ENCODE measurements at regions of chr1 and their contacts with region 1.

Region 1: DNA sequence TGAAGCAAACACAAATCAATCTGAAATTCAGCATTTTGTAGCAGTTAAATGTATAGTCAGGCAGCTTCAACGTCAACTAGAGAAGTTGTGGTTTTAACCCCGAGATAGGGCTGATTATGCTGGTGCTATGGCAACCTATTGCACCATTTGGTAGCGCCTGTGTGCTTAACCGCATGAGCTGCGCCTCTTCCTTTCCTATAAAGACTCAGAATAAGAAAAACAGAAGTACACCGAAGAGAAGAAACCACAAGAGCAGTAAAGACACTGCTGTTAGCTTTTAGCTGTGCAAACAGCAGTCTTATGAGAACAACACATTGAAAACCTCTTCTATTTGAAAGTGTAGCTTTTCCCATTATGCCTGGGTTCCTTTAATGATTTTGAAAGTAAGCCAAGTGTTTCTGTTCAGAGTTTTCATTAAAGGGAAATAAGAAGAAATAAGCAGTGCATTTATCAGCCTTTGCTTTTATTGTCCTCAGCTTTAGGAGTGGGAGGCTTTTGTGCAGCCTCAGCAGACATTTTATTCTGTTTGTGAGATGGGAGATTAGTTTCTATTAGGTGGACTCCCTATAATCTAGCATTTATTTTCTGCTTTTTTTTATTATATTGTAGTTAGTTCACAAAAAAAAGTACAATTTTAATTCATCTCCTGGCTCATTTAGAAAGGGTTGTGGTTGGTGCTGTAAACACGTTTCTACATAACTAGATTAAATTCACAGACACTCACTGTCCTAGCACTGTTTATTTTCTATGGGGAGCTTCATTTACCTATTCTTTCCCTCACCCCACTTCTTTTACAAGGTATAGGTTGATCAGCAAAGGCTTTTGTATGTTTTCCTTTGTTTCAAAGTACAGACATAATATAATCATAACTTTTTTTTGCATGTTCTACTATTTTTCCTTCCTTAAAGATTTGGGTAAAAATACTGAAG is 43.3 kb downstream of the PTPRC start:
- DNase-seq: peak; percentile 97
- ATAC-seq: peak; percentile 93
- H3K4me3 ChIP-seq: peak overlapping the region; percentile 12; the same call in 1 of the 2 replicates
- H3K27ac ChIP-seq: peak overlapping the region; percentile 81
- H3K4me1 ChIP-seq: peaks cover 63% of the 10 kb centered on the region
- H3K27me3 ChIP-seq: no peaks in the 10 kb centered on the region
- CTCF ChIP-seq: no peak
- EP300 ChIP-seq: peak; percentile 77 to 98
- POLR2A ChIP-seq: peak; percentile 48
- RAD21 ChIP-seq: peak; percentile 32

Region 2: GRCh38 chr1:198088360-198089071 is 593.6 kb before region 1 on chr1:
- CTCF ChIA-PET with region 1: interaction called, 3 read pairs
- POLR2A ChIA-PET with region 1: no interaction called
- RAD21 ChIA-PET with region 1: no interaction called
- SMC1A ChIA-PET with region 1: interaction called, 5 read pairs
- in situ Hi-C with region 1: loop called (anchors 10 kb)
- intact Hi-C with region 1: loop called (anchors 5 kb)
- DNase-seq: no peak
- ATAC-seq: peak; percentile 58
- H3K4me3 ChIP-seq: no peak overlapping the region
- H3K27ac ChIP-seq: no peak overlapping the region
- H3K4me1 ChIP-seq: no peaks in the 10 kb centered on the region
- H3K27me3 ChIP-seq: no peaks in the 10 kb centered on the region; a peak in 1 of 4 replicates
- CTCF ChIP-seq: peak; percentile 43 to 64 (median 48); a peak in 5 of 6 replicates
- EP300 ChIP-seq: no peak
- POLR2A ChIP-seq: no peak
- RAD21 ChIP-seq: peak; percentile 72

Region 3: DNA sequence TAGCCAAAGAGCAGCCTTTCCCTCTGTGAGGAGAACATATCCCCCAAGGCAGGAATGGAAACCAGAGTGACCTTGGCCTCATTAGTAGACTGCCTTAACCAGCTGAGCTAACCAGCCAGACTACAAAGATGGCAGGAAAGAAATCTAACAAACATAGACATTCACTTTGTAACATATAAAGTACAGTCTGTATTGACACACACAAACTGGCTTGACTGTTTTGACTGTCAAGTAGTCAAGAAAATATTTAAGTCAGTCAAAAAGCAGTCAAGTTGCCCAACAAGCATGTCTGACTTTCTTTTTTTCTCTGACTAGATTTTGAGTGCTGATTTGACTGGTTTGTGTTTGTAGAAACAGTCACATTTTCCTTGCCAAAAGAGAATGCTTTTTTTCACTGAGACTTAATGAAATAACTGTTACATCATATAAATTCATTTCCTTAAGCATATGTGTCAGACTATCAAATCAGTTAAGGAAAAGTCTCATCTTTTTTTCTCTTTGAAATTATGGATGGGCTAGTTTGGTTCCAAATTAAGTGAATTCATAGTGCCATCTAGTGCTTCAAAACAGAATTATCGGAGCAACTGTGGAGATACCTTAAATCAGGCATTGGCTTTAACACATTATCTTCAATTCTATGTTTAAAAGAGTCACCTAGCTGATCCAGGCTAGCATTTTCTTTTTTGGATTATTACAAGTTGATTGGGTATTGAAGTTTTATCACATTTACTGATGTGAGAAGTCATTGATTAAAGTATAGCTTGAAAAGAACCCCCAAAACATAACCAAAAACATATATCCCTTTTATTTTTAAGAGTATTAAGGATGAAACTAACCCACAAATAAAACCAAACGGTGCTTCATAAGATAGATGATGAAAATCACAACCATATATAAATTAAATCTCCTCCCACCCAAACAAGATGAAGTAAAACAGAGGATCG is 216.6 kb before region 1 on chr1:
- CTCF ChIA-PET with region 1: interaction called, 48 read pairs
- POLR2A ChIA-PET with region 1: no interaction called
- RAD21 ChIA-PET with region 1: interaction called, 36 read pairs
- SMC1A ChIA-PET with region 1: interaction called, 12 read pairs
- in situ Hi-C with region 1: no loop called
- intact Hi-C with region 1: loop called (anchors 2 kb)
- DNase-seq: no peak
- ATAC-seq: peak; percentile 85
- H3K4me3 ChIP-seq: no peak overlapping the region
- H3K27ac ChIP-seq: no peak overlapping the region
- H3K4me1 ChIP-seq: no peaks in the 10 kb centered on the region
- H3K27me3 ChIP-seq: no peaks in the 10 kb centered on the region
- CTCF ChIP-seq: peak; percentile 46 to 74 (median 59)
- EP300 ChIP-seq: no peak
- POLR2A ChIP-seq: no peak
- RAD21 ChIP-seq: peak; percentile 84

Region 4: DNA sequence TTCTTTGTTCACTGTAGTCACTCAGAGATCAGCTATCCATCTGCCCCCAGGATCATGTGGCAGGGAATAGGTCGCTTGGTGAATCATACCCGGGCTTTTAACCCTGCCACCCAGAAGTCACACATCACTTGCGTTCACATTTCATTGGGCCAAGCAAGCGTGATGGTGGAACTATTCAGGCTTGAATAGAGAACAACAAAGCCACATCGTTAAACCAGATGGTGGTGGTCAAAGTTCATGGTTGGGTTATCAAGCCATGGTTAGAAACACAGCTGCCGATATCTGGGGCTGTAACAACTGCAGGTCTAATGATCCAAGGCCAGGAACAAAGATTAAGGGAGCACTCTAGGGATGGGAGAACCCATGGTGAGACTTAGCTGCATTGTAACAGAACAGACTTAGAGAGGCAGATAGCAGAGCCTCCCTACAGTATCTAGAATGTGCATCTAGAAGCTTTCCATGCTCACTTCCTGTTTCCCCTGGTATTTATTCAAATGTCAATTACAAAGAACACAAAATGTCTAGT is 83.2 kb before region 1 on chr1:
- CTCF ChIA-PET with region 1: interaction called, 17 read pairs
- POLR2A ChIA-PET with region 1: interaction called, 11 read pairs
- RAD21 ChIA-PET with region 1: interaction called, 61 read pairs
- SMC1A ChIA-PET with region 1: interaction called, 83 read pairs
- in situ Hi-C with region 1: no loop called
- intact Hi-C with region 1: loop called (anchors 1 kb)
- DNase-seq: peak; percentile 89
- ATAC-seq: peak; percentile 88
- H3K4me3 ChIP-seq: peak overlapping the region; percentile 24; the same call in 1 of the 2 replicates
- H3K27ac ChIP-seq: peak overlapping the region; percentile 81
- H3K4me1 ChIP-seq: peaks cover 27% of the 10 kb centered on the region
- H3K27me3 ChIP-seq: no peaks in the 10 kb centered on the region
- CTCF ChIP-seq: no peak
- EP300 ChIP-seq: peak; percentile 63 to 84; a peak in 3 of 4 replicates
- POLR2A ChIP-seq: no peak; the same call in 1 of the 2 replicates
- RAD21 ChIP-seq: no peak

Region 5: DNA sequence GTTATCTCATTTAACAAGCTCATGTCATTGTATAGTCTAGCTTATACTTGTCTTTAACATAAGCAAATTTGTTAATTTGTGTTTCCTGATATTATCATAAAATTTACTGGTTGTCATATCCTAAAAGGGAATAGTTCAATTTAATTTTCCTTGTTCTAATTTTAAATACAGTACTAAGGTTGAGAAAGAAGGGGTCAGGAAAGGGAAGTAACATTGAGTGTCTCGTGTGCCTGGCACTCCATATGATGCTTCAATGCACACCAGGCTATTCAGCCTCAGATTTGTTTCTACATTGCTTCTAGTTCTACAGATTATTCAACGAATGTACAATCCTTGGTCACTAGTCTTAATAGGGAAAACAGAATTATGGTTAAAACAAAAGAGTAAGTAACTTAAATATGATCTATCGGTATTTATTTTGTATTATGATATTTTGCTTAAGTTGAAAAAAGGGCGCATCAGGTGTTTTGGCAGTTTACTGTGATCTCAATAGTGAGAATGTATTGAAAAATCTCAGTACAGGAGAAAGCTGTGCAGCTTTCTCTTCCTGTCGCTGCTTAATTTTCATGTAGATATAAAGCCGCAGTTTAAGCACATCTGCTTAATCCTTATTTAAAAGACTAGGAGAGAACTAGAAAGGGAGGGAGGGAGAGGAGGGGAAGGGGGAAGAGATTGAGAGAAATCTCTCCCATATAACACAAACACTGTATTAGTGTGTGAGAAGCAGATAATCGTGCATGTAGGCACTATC is 30.3 kb before region 1 on chr1:
- CTCF ChIA-PET with region 1: interaction called, 8 read pairs
- POLR2A ChIA-PET with region 1: interaction called, 17 read pairs
- RAD21 ChIA-PET with region 1: interaction called, 33 read pairs
- SMC1A ChIA-PET with region 1: interaction called, 35 read pairs
- in situ Hi-C with region 1: no loop called
- intact Hi-C with region 1: no loop called
- DNase-seq: no peak
- ATAC-seq: peak; percentile 29
- H3K4me3 ChIP-seq: no peak overlapping the region
- H3K27ac ChIP-seq: peak overlapping the region; percentile 20; the same call in 1 of the 2 replicates
- H3K4me1 ChIP-seq: peaks cover 32% of the 10 kb centered on the region
- H3K27me3 ChIP-seq: no peaks in the 10 kb centered on the region
- CTCF ChIP-seq: no peak
- EP300 ChIP-seq: no peak
- POLR2A ChIP-seq: no peak
- RAD21 ChIP-seq: no peak

Region 6: GRCh38 chr1:198696211-198696610 is 14.1 kb after region 1 on chr1:
- CTCF ChIA-PET with region 1: interaction called, 9 read pairs
- POLR2A ChIA-PET with region 1: interaction called, 4 read pairs
- RAD21 ChIA-PET with region 1: interaction called, 15 read pairs
- SMC1A ChIA-PET with region 1: interaction called, 9 read pairs
- in situ Hi-C with region 1: no loop called
- intact Hi-C with region 1: no loop called
- DNase-seq: no peak
- ATAC-seq: peak; percentile 81
- H3K4me3 ChIP-seq: no peak overlapping the region
- H3K27ac ChIP-seq: no peak overlapping the region
- H3K4me1 ChIP-seq: peaks cover 3% of the 10 kb centered on the region; the same call in 1 of the 2 replicates
- H3K27me3 ChIP-seq: no peaks in the 10 kb centered on the region
- CTCF ChIP-seq: no peak
- EP300 ChIP-seq: no peak
- POLR2A ChIP-seq: no peak
- RAD21 ChIP-seq: no peak